Activated naive CD4-positive, alpha-beta T cell treated with anti-CD3 and anti-CD28 coated beads for 36 hours (primary cell): ENCODE measurements at regions of chr17 and their contacts with region 1.

Region 1: GRCh38 chr17:59155439-59156182 is at the start of gene PRR11:
- DNase-seq: peak; percentile 97
- H3K4me3 Mint-ChIP-seq: no peak within 1 kb of the TSS
- H3K27ac Mint-ChIP-seq: no peak within 1 kb of the TSS
- H3K4me1 Mint-ChIP-seq: peaks cover 25% of the 10 kb centered on the region
- H3K27me3 Mint-ChIP-seq: no peaks in the 10 kb centered on the region
- total RNA-seq, gene PRR11: 77.4 to 82.1 TPM

Region 2: GRCh38 chr17:58631523-58632323 is 523.9 kb before region 1 on chr17:
- CTCF ChIA-PET with region 1: no interaction called
- intact Hi-C with region 1: loop called (anchors 1 kb)
- DNase-seq: peak; percentile 98
- H3K4me3 Mint-ChIP-seq: no peak overlapping the region
- H3K27ac Mint-ChIP-seq: no peak overlapping the region
- H3K4me1 Mint-ChIP-seq: peaks cover 3% of the 10 kb centered on the region
- H3K27me3 Mint-ChIP-seq: no peaks in the 10 kb centered on the region

Region 3: GRCh38 chr17:59004338-59005111 is 151.1 kb before region 1 on chr17:
- CTCF ChIA-PET with region 1: no interaction called
- intact Hi-C with region 1: loop called (anchors 1 kb)
- DNase-seq: peak; percentile 86
- H3K4me3 Mint-ChIP-seq: no peak overlapping the region
- H3K27ac Mint-ChIP-seq: peak overlapping the region; percentile 61
- H3K4me1 Mint-ChIP-seq: peaks cover 28% of the 10 kb centered on the region
- H3K27me3 Mint-ChIP-seq: no peaks in the 10 kb centered on the region

Region 4: GRCh38 chr17:59565171-59565969 is 409.8 kb after region 1 on chr17 and contains the start of gene DHX40:
- CTCF ChIA-PET with region 1: no interaction called
- intact Hi-C with region 1: loop called (anchors 1 kb)
- DNase-seq: peak; percentile 98
- H3K4me3 Mint-ChIP-seq: peak within 1 kb of the TSS; percentile 100
- H3K27ac Mint-ChIP-seq: peak within 1 kb of the TSS; percentile 98
- H3K4me1 Mint-ChIP-seq: peaks cover 21% of the 10 kb centered on the region
- H3K27me3 Mint-ChIP-seq: no peaks in the 10 kb centered on the region
- total RNA-seq, gene DHX40: 14.2 to 15.3 TPM

Region 5: DNA sequence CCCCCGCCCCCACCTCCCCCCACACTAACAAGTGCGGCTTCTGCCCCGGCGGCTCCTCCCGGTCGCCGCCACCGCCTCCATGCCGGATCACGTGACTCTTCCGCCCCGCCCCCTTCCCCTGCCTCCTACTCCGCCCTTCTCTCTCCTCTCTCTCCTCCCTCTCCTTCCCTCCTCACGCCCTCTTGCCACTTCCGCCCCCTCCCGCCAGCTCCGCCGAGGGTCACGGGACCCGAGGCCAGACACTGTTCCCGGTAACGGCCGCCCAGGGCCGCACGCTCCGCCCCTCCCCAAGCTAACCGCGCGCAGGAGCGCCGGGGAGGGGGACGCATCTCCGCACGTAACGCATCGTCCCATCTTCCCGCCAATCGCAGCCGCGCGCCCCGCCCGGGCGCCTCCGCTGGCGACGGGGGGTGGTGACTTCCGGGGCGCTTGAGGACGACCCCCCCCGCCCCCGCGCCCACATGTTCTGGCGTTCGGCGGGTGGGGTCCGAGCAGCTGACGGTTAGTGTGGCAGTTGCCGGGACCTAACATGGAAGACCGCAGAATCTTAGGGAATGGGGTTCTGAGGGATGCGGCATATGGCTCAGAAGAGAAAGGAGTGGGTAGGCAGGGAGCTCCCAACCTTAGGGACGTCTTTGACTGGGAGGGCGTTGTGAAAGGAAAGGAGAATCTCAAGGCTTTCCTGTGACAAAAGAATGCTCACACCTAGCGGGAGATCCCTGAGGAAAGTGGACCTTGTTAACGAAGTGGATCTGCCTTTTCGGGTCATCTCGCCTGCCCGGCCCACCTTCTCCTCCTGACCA is 1236.6 kb after region 1 on chr17 and contains the start of gene USP32:
- CTCF ChIA-PET with region 1: no interaction called
- intact Hi-C with region 1: loop called (anchors 1 kb)
- DNase-seq: peak; percentile 99
- H3K4me3 Mint-ChIP-seq: peak within 1 kb of the TSS; percentile 89
- H3K27ac Mint-ChIP-seq: peak within 1 kb of the TSS; percentile 96
- H3K4me1 Mint-ChIP-seq: peaks cover 44% of the 10 kb centered on the region
- H3K27me3 Mint-ChIP-seq: no peaks in the 10 kb centered on the region
- total RNA-seq, gene USP32: 27.6 to 28.9 TPM

Region 6: GRCh38 chr17:60677308-60678124 is 1521.9 kb after region 1 on chr17 and contains the start of gene BCAS3:
- CTCF ChIA-PET with region 1: no interaction called
- intact Hi-C with region 1: loop called (anchors 1 kb)
- DNase-seq: peak; percentile 99
- H3K4me3 Mint-ChIP-seq: peak within 1 kb of the TSS; percentile 91
- H3K27ac Mint-ChIP-seq: peak within 1 kb of the TSS; percentile 79
- H3K4me1 Mint-ChIP-seq: peaks cover 11% of the 10 kb centered on the region
- H3K27me3 Mint-ChIP-seq: no peaks in the 10 kb centered on the region
- total RNA-seq, gene BCAS3: 7.2 to 7.5 TPM